Right ventricle myocardium inferior (tissue), 1 donor: ENCODE measurements at regions of chr2 and their contacts with region 1.

Region 1: DNA sequence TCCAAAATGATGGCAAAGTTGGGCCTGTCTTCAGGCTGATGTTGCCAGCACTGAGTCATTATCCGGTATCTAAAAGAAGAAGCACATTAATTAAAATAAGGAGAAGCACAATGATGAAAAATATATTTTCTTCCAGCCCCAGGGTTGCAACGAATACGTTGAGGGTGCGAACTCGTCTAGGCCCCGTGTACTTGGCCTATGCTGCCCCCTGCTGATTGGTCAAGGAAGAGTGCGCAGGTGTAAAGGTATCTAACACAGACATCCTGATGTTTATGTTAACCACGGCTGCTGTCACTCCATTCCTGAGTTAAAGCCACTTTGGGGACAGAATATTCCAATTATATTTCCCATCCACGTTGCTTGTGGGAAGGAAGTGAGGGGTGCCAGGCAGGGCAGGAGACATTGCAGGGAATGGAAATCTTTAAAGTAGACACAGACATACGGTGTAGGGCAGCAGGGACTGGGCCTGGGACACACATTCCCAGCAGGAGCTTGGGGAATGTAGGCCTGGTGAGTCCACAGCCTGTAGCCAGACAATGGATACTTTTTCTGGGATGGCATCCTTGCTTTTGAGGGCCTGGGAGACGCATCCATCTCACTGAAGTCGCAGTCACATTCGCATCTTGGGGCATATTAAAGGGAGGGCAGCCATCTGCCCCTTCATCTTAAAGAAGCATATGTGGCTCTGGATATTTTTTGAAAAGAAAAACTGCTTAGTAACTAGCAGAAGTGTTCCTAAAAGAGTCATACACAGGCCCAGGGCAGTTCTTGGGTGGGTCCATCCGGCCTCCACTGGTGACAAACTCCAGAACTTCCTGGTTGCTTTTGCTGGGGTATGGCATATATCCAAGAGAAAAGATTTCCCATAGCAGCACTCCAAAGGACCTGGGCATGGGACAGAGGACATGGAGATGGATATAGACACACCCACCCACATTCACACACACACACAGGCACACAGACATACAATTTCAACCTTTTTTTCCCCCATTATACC is 81.9 kb downstream of the CLIP4 start:
- DNase-seq: no peak
- ATAC-seq: peak; percentile 75

Region 2: DNA sequence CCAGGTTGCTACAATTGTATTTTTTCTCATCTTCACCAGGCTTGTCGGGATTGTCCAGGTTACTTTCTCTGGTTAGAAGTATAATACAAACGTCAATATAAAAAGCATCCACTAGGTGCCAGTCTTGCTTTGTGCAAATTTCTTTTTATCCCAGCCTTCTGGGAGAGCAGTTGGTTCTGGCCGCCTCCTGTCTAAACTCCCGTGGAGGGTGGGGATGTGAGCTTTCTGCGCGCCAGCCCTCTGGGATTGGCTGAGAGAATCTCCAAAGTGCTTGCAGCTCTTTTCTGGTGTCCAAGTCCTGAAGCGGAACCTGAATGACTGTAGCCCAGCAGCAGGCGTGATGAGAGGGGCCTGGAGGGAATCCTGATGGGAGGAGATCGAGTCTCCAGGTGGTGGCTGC is 238.4 kb before region 1 on chr2:
- intact Hi-C with region 1: loop called (anchors 1 kb)
- DNase-seq: no peak
- ATAC-seq: peak; percentile 93

Region 3: GRCh38 chr2:29281086-29281915 is 84.2 kb after region 1 on chr2:
- intact Hi-C with region 1: no loop called
- DNase-seq: no peak
- ATAC-seq: no peak